Mammary epithelial cell (primary cell): ENCODE measurements at regions of chr7 and their contacts with region 1.

Region 1: GRCh38 chr7:80070391-80070790 is 64.2 kb upstream of the GNAI1 start:
- DNase-seq: no peak
- H3K4me3 ChIP-seq: no peak overlapping the region
- H3K27ac ChIP-seq: no peak overlapping the region
- H3K4me1 ChIP-seq: no peaks in the 10 kb centered on the region
- H3K27me3 ChIP-seq: no peaks in the 10 kb centered on the region
- CTCF ChIP-seq: no peak

Region 2: DNA sequence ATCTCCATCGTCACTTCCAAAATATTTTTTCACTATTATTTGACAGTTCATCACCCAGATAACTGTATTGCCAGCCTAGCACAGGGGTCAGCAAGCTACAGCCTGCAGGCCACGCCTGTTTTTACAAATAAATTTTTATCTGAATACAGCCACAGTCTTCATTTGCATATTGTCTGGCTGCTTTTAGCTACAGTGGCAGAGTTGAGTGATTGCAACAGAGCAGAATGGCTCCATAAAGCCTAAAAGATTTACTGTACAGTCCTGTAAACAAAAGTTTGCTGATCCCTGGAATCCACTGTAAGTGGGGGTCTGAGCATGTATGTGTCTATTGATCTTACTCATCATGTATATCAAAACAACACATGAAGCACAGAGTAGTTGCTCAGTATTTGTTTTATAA is 18.3 kb after region 1 on chr7:
- CTCF ChIA-PET with region 1: no interaction called
- dilution Hi-C with region 1: no loop called
- in situ Hi-C with region 1: no loop called
- intact Hi-C with region 1: loop called (anchors 1 kb)
- DNase-seq: peak; percentile 11
- H3K4me3 ChIP-seq: no peak overlapping the region
- H3K27ac ChIP-seq: no peak overlapping the region
- H3K4me1 ChIP-seq: peaks cover 14% of the 10 kb centered on the region
- H3K27me3 ChIP-seq: no peaks in the 10 kb centered on the region
- CTCF ChIP-seq: no peak